ENCODE measurements at regions of chr7 and their contacts with region 1.

Region 1: GRCh38 chr7:127392566-127393367 is at the start of gene ZNF800:
- DNase-seq: peak; percentile 93
- ATAC-seq: peak; percentile 81
- H3K4me3 Mint-ChIP-seq: peak within 1 kb of the TSS; percentile 87
- H3K27ac Mint-ChIP-seq: peak within 1 kb of the TSS; percentile 96
- H3K4me1 Mint-ChIP-seq: peaks cover 62% of the 10 kb centered on the region
- H3K27me3 Mint-ChIP-seq: no peaks in the 10 kb centered on the region
- total RNA-seq, gene ZNF800: 27.5 to 34.7 TPM

Region 2: DNA sequence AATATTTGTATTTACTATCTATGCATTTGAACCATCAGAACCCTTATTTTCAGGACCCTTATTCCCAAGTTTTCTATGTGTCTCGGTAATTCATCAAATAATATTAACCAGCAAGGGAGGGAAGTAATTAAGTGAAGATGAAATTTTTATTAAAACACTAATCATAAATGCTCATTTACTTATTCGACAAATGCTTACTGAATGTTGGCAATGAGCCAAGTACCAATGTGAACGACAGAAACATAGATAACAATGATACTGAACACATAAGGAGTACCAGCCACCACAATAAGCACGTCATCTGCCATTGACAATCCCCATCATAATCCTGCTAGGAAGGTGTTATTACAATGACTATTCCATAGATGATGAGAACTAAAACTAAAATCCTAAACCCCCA is 185.5 kb before region 1 on chr7:
- CTCF ChIA-PET with region 1: no interaction called
- POLR2A ChIA-PET with region 1: no interaction called
- intact Hi-C with region 1: no loop called
- DNase-seq: no peak
- ATAC-seq: no peak
- H3K4me3 Mint-ChIP-seq: no peak overlapping the region
- H3K27ac Mint-ChIP-seq: no peak overlapping the region
- H3K4me1 Mint-ChIP-seq: no peaks in the 10 kb centered on the region
- H3K27me3 Mint-ChIP-seq: peaks cover 9% of the 10 kb centered on the region

Region 3: DNA sequence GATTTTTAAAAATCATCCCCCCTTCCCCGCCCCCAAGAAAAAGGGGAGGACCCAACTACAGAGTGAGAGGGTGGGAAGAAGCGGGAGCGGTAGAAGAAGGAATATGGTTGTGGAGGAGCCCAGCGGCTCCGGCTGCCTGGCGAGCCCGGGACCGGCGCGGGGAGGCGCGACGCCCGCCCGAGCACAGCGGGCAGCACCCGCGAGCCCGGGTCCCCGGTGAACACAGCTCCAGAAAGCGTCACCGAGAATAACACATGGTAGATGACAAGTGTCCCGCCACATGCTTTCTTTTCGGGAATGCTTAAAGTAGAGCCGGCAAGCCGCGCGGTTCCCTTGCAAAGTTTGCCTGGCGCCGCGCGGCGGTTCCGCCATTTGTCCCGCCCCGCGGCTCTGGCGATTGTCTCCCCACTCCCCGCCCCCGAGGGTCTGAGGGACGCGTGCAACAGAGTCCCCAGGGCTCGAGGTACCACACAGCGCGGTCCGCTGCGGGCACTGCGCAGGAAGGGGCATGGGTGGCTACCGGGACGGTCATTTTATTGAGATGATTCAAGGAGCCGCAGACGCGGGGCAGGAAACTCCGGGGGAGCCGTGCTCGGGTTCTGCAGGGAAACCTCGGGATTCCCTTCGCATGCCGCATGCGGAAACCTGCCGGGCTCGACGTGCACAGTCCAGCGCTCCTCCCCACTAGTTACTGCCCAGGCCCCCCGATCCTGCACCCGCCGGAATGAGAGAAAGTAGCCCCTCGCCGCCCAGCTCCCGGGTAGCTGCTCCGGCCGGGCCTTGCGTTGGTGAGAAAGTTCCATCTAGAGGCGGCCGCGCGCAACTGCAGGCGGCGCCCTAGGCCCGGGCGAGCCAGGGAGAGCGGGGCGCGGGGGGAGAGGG is 139.2 kb before region 1 on chr7:
- CTCF ChIA-PET with region 1: no interaction called
- POLR2A ChIA-PET with region 1: interaction called, 3 read pairs
- intact Hi-C with region 1: loop called in 1 of 2 experiments (anchors 2 kb)
- DNase-seq: peak; percentile 78
- ATAC-seq: peak; percentile 83
- H3K4me3 Mint-ChIP-seq: peak overlapping the region; percentile 75
- H3K27ac Mint-ChIP-seq: no peak overlapping the region
- H3K4me1 Mint-ChIP-seq: peaks cover 9% of the 10 kb centered on the region
- H3K27me3 Mint-ChIP-seq: peaks cover 63% of the 10 kb centered on the region

Region 4: DNA sequence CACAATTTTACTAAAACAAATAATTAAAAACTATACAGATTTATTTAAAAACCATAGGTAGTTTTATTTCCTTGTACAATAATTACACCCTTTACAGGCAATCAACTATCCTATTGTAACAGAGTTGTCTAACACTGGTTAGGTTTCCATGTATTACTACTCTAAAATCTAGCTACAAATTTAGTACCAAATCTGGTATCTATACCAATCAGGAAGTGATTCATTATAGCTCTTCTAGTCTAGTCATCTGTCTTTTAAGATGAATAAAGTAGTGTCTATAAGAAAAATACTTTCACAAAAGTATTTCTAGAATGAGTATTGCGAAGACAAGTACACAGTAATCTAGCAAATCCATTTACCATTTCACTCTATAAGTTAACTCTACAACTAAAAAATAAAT is 17.1 kb before region 1 on chr7:
- CTCF ChIA-PET with region 1: interaction called, 4 read pairs
- POLR2A ChIA-PET with region 1: interaction called, 4 read pairs
- intact Hi-C with region 1: loop called in 1 of 2 experiments (anchors 1 kb)
- DNase-seq: no peak
- ATAC-seq: peak; percentile 98
- H3K4me3 Mint-ChIP-seq: no peak overlapping the region
- H3K27ac Mint-ChIP-seq: no peak overlapping the region
- H3K4me1 Mint-ChIP-seq: peaks cover 52% of the 10 kb centered on the region
- H3K27me3 Mint-ChIP-seq: no peaks in the 10 kb centered on the region

Region 5: GRCh38 chr7:127651556-127652332 is 259.0 kb after region 1 on chr7 and contains the start of gene SND1:
- CTCF ChIA-PET with region 1: no interaction called
- POLR2A ChIA-PET with region 1: interaction called, 3 read pairs
- intact Hi-C with region 1: loop called (anchors 1 kb)
- DNase-seq: peak; percentile 99
- ATAC-seq: peak; percentile 94
- H3K4me3 Mint-ChIP-seq: no peak within 1 kb of the TSS
- H3K27ac Mint-ChIP-seq: peak within 1 kb of the TSS; percentile 99
- H3K4me1 Mint-ChIP-seq: peaks cover 37% of the 10 kb centered on the region
- H3K27me3 Mint-ChIP-seq: no peaks in the 10 kb centered on the region
- total RNA-seq, gene SND1: 193 to 214 TPM

Region 6: DNA sequence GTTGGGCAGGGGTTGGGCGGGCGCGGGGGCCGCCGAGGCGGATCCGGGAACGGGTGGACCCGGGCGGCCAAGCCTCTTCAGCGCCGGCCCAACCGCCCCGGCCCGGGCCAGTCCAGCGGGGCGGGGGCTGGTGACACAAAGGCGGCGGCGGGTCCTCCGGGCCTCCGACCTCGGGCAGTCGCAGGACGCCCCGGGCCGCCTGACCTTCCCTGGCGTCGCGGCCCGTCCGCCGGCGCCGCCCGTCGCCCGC is 1138.0 kb after region 1 on chr7:
- CTCF ChIA-PET with region 1: no interaction called
- POLR2A ChIA-PET with region 1: no interaction called
- intact Hi-C with region 1: loop called in 1 of 2 experiments (anchors 5 kb)
- DNase-seq: no peak
- ATAC-seq: no peak
- H3K4me3 Mint-ChIP-seq: peak overlapping the region; percentile 95
- H3K27ac Mint-ChIP-seq: no peak overlapping the region
- H3K4me1 Mint-ChIP-seq: peaks cover 27% of the 10 kb centered on the region
- H3K27me3 Mint-ChIP-seq: no peaks in the 10 kb centered on the region